GM12878 (cell line): ENCODE measurements at regions of chr18 and their contacts with region 1.

Region 1: GRCh38 chr18:51182824-51183223 is 14.7 kb downstream of the MEX3C start:
- DNase-seq: no peak
- ATAC-seq: peak; percentile 32
- H3K4me3 ChIP-seq: no peak overlapping the region
- H3K27ac ChIP-seq: no peak overlapping the region; the same call in 1 of the 2 replicates
- H3K4me1 ChIP-seq: peaks cover 16% of the 10 kb centered on the region
- H3K27me3 ChIP-seq: no peaks in the 10 kb centered on the region
- CTCF ChIP-seq: no peak
- EP300 ChIP-seq: no peak
- POLR2A ChIP-seq: no peak
- RAD21 ChIP-seq: no peak

Region 2: DNA sequence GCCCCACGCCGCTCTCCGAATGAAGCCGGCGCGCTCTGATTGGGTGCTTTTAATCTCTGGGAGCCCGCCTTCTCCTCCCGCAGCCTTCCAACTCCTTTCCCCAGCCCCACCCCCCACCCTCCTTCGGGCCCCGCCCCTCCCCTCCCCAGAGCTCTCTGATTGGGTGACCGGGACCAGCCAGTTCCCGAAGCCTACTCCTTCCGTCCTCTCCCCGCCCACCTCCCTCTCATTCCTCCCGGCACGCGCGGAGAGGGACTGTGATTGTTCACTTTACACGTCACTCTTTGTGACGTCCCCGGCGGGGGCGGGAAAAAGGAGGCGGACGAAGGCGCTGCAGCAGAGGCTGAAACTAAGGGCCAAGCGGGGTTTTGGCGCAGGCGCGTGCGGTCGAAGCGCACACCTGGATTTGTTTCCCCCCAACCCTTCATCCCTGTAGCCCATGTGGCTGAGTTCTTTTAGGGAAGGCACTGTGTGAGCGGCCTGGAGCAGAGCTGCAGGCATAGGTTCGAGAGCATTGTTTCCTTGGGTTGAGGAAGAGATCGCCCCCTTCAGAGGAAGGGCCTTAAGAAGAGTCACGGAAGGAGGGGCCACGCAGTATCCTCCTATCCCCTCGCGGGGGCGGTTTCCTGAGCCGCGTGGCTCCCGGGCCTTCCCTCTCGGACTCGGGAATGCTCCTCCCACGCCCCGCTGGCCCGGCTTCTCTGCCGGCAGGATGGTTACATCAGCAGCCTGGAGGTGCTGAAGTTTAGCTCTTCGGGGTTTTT is 15.0 kb after region 1 on chr18 and contains the start of gene MEX3C:
- CTCF ChIA-PET with region 1: interaction called, 14 read pairs
- POLR2A ChIA-PET with region 1: interaction called, 47 read pairs
- RAD21 ChIA-PET with region 1: interaction called, 22 read pairs
- SMC1A ChIA-PET with region 1: interaction called, 79 read pairs
- in situ Hi-C with region 1: no loop called
- intact Hi-C with region 1: no loop called
- DNase-seq: peak; percentile 95
- ATAC-seq: peak; percentile 83
- H3K4me3 ChIP-seq: peak within 1 kb of the TSS; percentile 69
- H3K27ac ChIP-seq: peak within 1 kb of the TSS; percentile 95
- H3K4me1 ChIP-seq: no peaks in the 10 kb centered on the region
- H3K27me3 ChIP-seq: no peaks in the 10 kb centered on the region
- CTCF ChIP-seq: peak in 2 of 3 experiments; percentile 9 to 23; a peak in 2 of 6 replicates
- EP300 ChIP-seq: no peak
- POLR2A ChIP-seq: peak; percentile 77
- RAD21 ChIP-seq: no peak
- polyA plus RNA-seq, gene MEX3C: 7.9 to 9.9 TPM